ENCODE measurements at regions of chr1 and their contacts with region 1.

Region 1: GRCh38 chr1:208245185-208245705 is 1.1 kb upstream of the PLXNA2 start:
- DNase-seq: peak; percentile 98
- H3K4me3 Mint-ChIP-seq: peak overlapping the region; percentile 94
- H3K27ac Mint-ChIP-seq: no peak overlapping the region
- H3K4me1 Mint-ChIP-seq: peaks cover 26% of the 10 kb centered on the region
- H3K27me3 Mint-ChIP-seq: no peaks in the 10 kb centered on the region
- CTCF ChIP-seq: peak; percentile 94

Region 2: DNA sequence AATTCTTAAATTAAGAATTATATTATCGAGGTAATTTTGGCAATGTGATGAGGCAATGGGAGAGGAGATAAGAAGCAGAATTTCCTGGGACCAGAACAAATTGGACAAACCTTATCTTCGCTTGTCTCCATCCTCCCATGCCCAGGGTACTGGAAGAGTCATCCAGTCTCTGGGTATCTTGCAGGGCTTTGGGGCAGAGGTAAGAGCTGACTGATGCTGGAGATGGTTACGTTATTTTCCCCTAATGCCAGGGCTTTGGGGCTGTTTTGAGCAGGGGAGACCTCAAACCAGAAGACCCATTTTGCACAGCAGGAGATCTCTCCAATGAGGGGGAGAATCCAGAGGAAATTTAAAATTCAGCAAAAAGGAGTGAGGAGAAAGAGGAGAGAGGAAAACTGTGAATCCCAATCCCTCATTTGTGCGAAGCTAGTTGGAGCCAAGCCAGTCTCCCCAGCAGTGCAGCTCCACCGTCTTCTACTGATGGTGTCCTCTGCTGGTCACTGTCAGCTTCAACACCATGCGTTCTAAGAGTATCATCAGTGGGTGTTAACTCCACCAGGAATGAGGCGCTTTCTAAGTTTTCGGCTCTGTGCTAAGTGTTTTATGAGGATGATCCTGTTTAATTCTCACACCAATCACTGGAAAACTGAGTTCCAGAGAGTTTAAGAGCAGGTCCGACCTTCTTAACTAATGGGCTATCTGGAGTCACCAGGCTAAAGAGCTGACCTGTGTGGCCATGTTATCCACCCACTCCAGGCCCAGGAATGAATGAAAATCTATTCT is 247.6 kb before region 1 on chr1:
- CTCF ChIA-PET with region 1: interaction called, 10 read pairs
- POLR2A ChIA-PET with region 1: interaction called, 5 read pairs
- intact Hi-C with region 1: no loop called
- DNase-seq: peak; percentile 92
- H3K4me3 Mint-ChIP-seq: no peak overlapping the region
- H3K27ac Mint-ChIP-seq: no peak overlapping the region
- H3K4me1 Mint-ChIP-seq: no peaks in the 10 kb centered on the region
- H3K27me3 Mint-ChIP-seq: peaks cover 38% of the 10 kb centered on the region
- CTCF ChIP-seq: peak; percentile 95

Region 3: GRCh38 chr1:208047476-208047934 is 197.7 kb before region 1 on chr1:
- CTCF ChIA-PET with region 1: interaction called, 347 read pairs
- POLR2A ChIA-PET with region 1: interaction called, 12 read pairs
- intact Hi-C with region 1: no loop called
- DNase-seq: peak; percentile 12
- H3K4me3 Mint-ChIP-seq: no peak overlapping the region
- H3K27ac Mint-ChIP-seq: peak overlapping the region; percentile 41
- H3K4me1 Mint-ChIP-seq: peaks cover 12% of the 10 kb centered on the region
- H3K27me3 Mint-ChIP-seq: no peaks in the 10 kb centered on the region
- CTCF ChIP-seq: no peak

Region 4: GRCh38 chr1:208107425-208108212 is 137.6 kb before region 1 on chr1:
- CTCF ChIA-PET with region 1: interaction called, 336 read pairs
- POLR2A ChIA-PET with region 1: interaction called, 18 read pairs
- intact Hi-C with region 1: no loop called
- DNase-seq: peak; percentile 100
- H3K4me3 Mint-ChIP-seq: peak overlapping the region; percentile 28
- H3K27ac Mint-ChIP-seq: peak overlapping the region; percentile 69
- H3K4me1 Mint-ChIP-seq: peaks cover 47% of the 10 kb centered on the region
- H3K27me3 Mint-ChIP-seq: no peaks in the 10 kb centered on the region
- CTCF ChIP-seq: no peak

Region 5: DNA sequence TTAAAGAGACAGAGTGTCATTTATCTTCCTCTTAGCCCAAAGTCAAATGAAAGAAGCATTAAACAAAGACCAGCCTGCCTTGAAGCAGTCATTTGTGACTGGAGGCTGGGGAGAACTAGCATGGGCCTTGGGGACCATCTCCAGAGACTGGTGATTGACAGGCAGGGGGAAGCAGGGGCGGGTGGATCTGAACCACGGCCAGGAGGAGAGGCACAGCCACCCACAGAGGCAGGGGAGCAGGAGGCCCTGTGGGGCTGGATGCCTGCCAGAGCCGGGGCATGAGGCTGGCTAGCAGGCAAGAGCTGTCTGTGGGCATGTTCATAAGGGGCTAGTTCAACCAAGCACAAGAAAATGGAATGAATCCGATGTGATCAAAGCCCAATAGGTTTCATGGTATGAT is 75.0 kb before region 1 on chr1:
- CTCF ChIA-PET with region 1: interaction called, 1,037 read pairs
- POLR2A ChIA-PET with region 1: interaction called, 12 read pairs
- intact Hi-C with region 1: no loop called
- DNase-seq: peak; percentile 62
- H3K4me3 Mint-ChIP-seq: no peak overlapping the region
- H3K27ac Mint-ChIP-seq: no peak overlapping the region
- H3K4me1 Mint-ChIP-seq: peaks cover 41% of the 10 kb centered on the region
- H3K27me3 Mint-ChIP-seq: no peaks in the 10 kb centered on the region
- CTCF ChIP-seq: no peak

Region 6: GRCh38 chr1:208291923-208292711 is 46.9 kb after region 1 on chr1:
- CTCF ChIA-PET with region 1: interaction called, 12 read pairs
- POLR2A ChIA-PET with region 1: no interaction called
- intact Hi-C with region 1: no loop called
- DNase-seq: peak; percentile 15
- H3K4me3 Mint-ChIP-seq: no peak overlapping the region
- H3K27ac Mint-ChIP-seq: no peak overlapping the region
- H3K4me1 Mint-ChIP-seq: no peaks in the 10 kb centered on the region
- H3K27me3 Mint-ChIP-seq: peaks cover 98% of the 10 kb centered on the region
- CTCF ChIP-seq: no peak

Region 7: DNA sequence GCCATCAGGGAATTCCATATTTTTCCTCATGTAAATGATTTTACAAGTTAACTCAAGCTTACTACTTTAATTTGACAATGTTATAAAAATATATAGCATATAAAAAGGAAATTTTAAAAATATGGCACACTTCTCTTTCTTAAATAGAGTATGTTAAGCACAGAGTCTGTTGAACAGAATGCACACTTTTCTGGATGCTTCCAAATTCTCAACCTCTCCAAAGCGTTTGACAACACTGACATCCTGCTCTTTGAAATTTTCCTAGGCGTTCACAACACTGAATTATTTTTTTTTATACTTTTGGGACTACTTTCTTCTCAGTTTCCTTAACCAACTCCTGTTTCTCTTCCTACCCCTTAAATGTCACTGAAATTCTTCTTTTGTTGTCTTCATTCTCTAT is 116.8 kb after region 1 on chr1:
- CTCF ChIA-PET with region 1: no interaction called
- POLR2A ChIA-PET with region 1: no interaction called
- intact Hi-C with region 1: no loop called
- DNase-seq: no peak
- H3K4me3 Mint-ChIP-seq: no peak overlapping the region
- H3K27ac Mint-ChIP-seq: no peak overlapping the region
- H3K4me1 Mint-ChIP-seq: no peaks in the 10 kb centered on the region
- H3K27me3 Mint-ChIP-seq: peaks cover 59% of the 10 kb centered on the region
- CTCF ChIP-seq: no peak

Region 8: GRCh38 chr1:209490013-209490412 is 1244.8 kb after region 1 on chr1:
- CTCF ChIA-PET with region 1: interaction called, 8 read pairs
- POLR2A ChIA-PET with region 1: no interaction called
- intact Hi-C with region 1: loop called (anchors 2 kb)
- DNase-seq: peak; percentile 69
- H3K4me3 Mint-ChIP-seq: no peak overlapping the region
- H3K27ac Mint-ChIP-seq: no peak overlapping the region
- H3K4me1 Mint-ChIP-seq: peaks cover 26% of the 10 kb centered on the region
- H3K27me3 Mint-ChIP-seq: no peaks in the 10 kb centered on the region
- CTCF ChIP-seq: peak; percentile 90

Measured in MCF 10A (cell line).